Calu3 (cell line): ENCODE measurements at regions of chr12 and their contacts with region 1.

Region 1: DNA sequence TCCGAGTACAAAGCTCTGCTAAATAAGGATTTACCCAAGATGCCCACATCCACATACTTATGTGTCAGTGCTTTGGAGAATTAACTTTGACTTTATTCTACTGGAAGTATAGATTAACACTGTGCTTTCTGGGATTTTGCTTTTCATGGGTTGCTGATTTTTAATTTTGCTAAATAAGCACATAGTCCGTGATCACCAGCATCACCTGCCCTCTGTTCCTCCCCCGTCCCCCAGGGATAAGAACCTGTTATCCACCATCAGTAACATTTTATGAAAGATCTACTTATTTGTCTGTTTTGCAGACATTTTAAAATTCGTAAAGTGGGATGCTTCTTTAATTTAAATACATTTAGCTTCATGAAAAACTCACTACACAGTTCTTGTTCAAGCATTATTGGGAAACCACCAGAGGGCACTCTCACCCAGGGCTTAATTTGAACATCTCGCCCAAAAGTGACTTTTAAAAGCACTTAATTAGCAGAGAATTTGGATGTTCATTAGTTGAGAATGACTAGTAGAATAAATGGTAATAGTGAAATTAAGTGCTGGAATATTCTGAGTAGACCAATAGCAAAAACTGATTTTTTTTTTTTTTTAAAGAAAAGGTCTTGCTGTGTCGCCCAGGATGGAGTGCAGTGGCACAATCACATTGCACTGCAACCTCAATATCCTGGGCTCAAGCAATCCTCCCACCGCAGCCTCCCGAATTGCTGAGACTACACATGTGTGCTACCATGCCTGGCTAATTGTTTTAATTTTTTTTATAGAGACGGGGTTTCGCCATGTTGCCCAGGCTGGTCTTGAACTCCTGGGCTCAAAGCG is 35.7 kb downstream of the MRPL42 start:
- DNase-seq: peak; percentile 61
- H3K4me3 Mint-ChIP-seq: no peak overlapping the region
- H3K27ac Mint-ChIP-seq: no peak overlapping the region
- H3K4me1 Mint-ChIP-seq: no peaks in the 10 kb centered on the region
- H3K27me3 Mint-ChIP-seq: no peaks in the 10 kb centered on the region
- CTCF ChIP-seq: peak; percentile 71

Region 2: GRCh38 chr12:93563807-93564538 is 61.0 kb after region 1 on chr12:
- CTCF ChIA-PET with region 1: interaction called, 5 read pairs
- intact Hi-C with region 1: loop called (anchors 2 kb)
- DNase-seq: peak; percentile 66
- H3K4me3 Mint-ChIP-seq: no peak overlapping the region
- H3K27ac Mint-ChIP-seq: peak overlapping the region; percentile 33
- H3K4me1 Mint-ChIP-seq: peaks cover 23% of the 10 kb centered on the region
- H3K27me3 Mint-ChIP-seq: peaks cover 28% of the 10 kb centered on the region
- CTCF ChIP-seq: no peak

Region 3: GRCh38 chr12:93742110-93742934 is 239.3 kb after region 1 on chr12:
- CTCF ChIA-PET with region 1: no interaction called
- intact Hi-C with region 1: loop called (anchors 5 kb)
- DNase-seq: peak; percentile 78
- H3K4me3 Mint-ChIP-seq: peak overlapping the region; percentile 64
- H3K27ac Mint-ChIP-seq: peak overlapping the region; percentile 3
- H3K4me1 Mint-ChIP-seq: peaks cover 11% of the 10 kb centered on the region
- H3K27me3 Mint-ChIP-seq: no peaks in the 10 kb centered on the region
- CTCF ChIP-seq: peak; percentile 32

Region 4: DNA sequence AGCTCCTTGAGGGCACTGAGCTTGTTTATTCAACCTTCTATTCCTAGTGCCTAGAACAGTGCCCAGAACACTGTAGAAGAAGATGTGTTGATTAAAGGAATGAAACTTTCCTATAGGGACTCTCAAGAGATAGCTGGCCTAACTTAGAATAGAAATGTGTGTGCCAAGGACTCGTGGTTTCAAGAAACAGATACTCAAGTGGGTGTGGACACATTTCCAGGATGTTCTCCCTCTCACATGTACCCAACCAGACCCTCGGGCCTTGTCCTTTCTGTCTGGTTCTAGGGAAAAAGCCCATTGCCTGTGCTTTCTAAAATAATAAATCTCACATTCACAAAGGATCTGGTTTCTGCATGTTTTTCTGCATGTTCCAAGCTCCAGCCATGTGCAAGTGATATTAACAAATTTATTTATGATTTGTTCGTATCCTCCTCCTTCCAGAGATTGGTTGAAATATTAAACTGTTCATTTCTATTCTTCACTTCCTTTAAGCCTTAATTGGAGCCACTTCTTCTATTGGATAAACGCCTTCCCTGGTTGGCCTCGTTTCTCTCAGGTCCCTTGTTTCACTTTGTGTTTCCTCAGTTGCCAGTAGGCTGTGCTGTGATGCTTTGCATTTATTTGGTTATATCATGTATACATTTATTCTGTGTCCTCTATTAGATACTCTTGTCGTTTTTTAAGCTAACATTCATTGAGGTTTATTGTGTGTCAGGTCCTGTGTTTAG is 263.9 kb after region 1 on chr12:
- CTCF ChIA-PET with region 1: no interaction called
- intact Hi-C with region 1: loop called (anchors 2 kb)
- DNase-seq: peak; percentile 40
- H3K4me3 Mint-ChIP-seq: no peak overlapping the region
- H3K27ac Mint-ChIP-seq: no peak overlapping the region
- H3K4me1 Mint-ChIP-seq: peaks cover 9% of the 10 kb centered on the region
- H3K27me3 Mint-ChIP-seq: no peaks in the 10 kb centered on the region
- CTCF ChIP-seq: peak; percentile 24

Region 5: GRCh38 chr12:93979189-93979588 is 476.2 kb after region 1 on chr12:
- CTCF ChIA-PET with region 1: no interaction called
- intact Hi-C with region 1: loop called (anchors 5 kb)
- DNase-seq: no peak
- H3K4me3 Mint-ChIP-seq: no peak overlapping the region
- H3K27ac Mint-ChIP-seq: no peak overlapping the region
- H3K4me1 Mint-ChIP-seq: no peaks in the 10 kb centered on the region
- H3K27me3 Mint-ChIP-seq: peaks cover 36% of the 10 kb centered on the region
- CTCF ChIP-seq: peak; percentile 22